WTC11 (cell line): ENCODE measurements at regions of chr14 and their contacts with region 1.

Region 1: DNA sequence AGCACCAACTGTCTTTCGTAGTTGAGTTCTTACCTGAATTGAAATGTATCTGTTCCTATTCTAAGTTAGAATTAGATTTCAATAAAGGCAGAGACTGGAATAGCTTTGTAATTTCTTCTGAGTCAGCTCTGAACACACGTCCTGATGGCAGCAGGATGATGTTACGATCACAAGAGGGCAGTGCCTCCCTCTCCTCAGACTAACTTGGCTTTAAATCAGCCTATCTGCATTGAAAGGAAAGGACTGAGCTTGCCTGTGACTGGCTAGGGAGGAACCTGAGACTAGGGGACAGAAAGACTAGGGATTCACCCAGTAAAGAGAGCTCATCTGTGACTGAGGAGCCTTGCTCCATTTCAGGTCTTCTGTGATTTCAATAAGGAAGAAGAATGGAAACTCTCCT is 323.7 kb upstream of the OR4E1 start:
- DNase-seq: peak; percentile 39
- ATAC-seq: peak; percentile 100
- H3K4me3 Mint-ChIP-seq: no peak overlapping the region
- H3K27ac Mint-ChIP-seq: peak overlapping the region; percentile 63; the same call in 1 of the 2 replicates
- H3K4me1 Mint-ChIP-seq: peaks cover 3% of the 10 kb centered on the region
- H3K27me3 Mint-ChIP-seq: no peaks in the 10 kb centered on the region
- CTCF ChIP-seq: no peak

Region 2: DNA sequence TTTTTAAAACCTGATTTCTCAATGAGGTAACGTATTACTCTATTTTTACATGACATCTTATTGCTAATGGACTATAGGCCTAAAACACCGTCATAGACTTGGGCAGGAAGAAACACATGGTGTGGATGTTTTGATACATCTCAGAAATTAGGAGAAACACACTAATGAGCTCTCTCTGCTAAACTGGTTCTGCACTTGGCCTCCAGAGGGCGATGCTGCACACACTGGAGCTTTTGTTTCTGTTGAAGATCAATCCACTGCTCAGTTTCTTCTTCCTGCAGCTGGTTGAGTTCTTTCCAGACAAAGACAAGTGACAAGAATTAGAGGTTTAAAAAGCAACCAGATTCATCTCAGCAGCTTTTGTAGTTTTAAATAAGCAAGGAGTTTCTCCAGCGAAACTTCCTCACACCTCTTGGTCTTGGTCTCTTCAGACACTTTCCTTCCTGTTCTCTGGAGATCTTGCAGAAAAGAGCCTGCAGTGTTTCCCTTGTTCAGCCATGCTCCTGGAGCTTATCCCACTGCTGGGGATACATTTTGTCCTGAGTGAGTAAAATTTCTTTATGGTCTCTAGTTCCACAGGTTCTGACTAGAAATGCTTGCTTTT is 145.1 kb before region 1 on chr14:
- CTCF ChIA-PET with region 1: interaction called, 14 read pairs
- POLR2A ChIA-PET with region 1: no interaction called
- DNase-seq: peak; percentile 77
- ATAC-seq: peak; percentile 83
- H3K4me3 Mint-ChIP-seq: no peak overlapping the region
- H3K27ac Mint-ChIP-seq: no peak overlapping the region
- H3K4me1 Mint-ChIP-seq: no peaks in the 10 kb centered on the region
- H3K27me3 Mint-ChIP-seq: peaks cover 20% of the 10 kb centered on the region
- CTCF ChIP-seq: peak; percentile 30

Region 3: DNA sequence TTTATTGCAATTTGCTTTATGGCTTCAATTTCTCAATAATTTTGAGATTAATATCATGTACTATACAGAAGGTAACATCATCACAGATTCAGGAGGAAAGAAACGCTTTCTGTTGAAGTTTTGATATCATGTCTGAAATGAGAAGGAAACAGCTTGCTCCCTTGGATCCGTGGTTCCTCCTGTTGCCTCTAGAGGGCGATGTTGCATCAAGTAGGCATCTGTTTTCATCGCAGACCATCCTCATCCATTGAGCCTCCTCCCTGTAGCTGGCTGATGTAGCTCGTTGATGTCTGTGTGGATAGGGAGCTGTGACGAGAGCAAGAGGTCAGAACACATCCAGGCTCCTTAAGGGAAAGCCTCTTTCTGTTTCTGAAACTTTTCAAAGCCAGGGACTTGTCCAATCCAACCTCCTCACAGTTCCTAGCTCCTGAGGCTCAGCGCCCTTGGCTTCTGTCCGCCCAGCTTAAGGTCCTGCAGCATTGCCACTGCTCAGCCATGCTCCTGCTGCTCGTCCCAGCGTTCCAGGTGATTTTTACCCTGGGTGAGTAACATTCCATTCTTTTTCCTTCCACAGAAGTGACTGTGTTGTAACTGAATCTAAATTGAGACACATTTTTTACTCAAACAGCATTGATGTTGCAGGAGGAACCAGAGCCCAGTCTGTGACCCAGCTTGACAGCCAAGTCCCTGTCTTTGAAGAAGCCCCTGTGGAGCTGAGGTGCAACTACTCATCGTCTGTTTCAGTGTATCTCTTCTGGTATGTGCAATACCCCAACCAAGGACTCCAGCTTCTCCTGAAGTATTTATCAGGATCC is 18.9 kb before region 1 on chr14:
- CTCF ChIA-PET with region 1: interaction called, 123 read pairs
- POLR2A ChIA-PET with region 1: interaction called, 3 read pairs
- DNase-seq: peak; percentile 67
- ATAC-seq: peak; percentile 93
- H3K4me3 Mint-ChIP-seq: no peak overlapping the region
- H3K27ac Mint-ChIP-seq: no peak overlapping the region
- H3K4me1 Mint-ChIP-seq: no peaks in the 10 kb centered on the region
- H3K27me3 Mint-ChIP-seq: peaks cover 30% of the 10 kb centered on the region
- CTCF ChIP-seq: peak; percentile 87

Region 4: DNA sequence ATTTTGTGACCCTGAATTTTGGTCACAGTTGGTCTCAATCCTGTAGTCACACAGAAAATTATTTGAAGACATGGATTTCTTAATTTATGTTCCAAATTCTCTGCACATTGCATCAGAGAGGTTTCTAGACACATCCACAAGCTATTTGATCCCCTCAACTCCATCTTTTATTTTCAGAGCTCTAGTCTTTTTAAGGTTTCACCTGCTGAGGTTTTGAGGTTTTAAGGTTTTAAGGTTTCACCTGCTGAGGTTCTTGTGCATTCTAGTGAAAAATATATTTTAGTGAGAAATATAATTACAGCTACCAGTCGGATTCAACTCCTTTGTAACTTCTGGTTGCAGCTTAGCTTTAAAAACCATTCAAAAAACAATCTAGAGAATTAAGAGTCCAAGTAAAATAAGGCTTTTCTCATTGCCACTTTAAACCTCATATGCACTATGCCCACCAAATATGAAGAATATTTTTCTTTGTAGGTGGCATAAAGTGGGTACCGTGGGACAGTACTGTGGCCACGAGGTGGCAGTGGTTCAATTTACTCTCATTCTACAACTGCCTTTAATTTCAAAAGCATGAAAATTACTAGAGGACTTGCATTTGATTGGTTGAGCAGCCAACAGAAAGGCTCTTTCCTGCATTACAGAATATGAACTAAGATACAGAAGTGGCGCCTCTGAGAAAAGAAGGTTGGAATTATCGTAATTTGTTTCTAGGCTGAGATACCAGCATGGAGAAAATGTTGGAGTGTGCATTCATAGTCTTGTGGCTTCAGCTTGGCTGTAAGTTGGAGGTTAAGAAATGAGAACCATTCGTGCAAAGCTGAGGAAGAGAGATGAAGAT is 42.9 kb after region 1 on chr14:
- CTCF ChIA-PET with region 1: interaction called, 24 read pairs
- POLR2A ChIA-PET with region 1: no interaction called
- DNase-seq: no peak
- ATAC-seq: peak; percentile 41; the same call in 1 of the 2 replicates
- H3K4me3 Mint-ChIP-seq: no peak overlapping the region
- H3K27ac Mint-ChIP-seq: no peak overlapping the region
- H3K4me1 Mint-ChIP-seq: no peaks in the 10 kb centered on the region
- H3K27me3 Mint-ChIP-seq: no peaks in the 10 kb centered on the region; the same call in 1 of the 2 replicates
- CTCF ChIP-seq: no peak

Region 5: GRCh38 chr14:22052795-22053194 is 55.5 kb after region 1 on chr14:
- CTCF ChIA-PET with region 1: interaction called, 15 read pairs
- POLR2A ChIA-PET with region 1: no interaction called
- DNase-seq: no peak
- ATAC-seq: peak; percentile 30; the same call in 1 of the 2 replicates
- H3K4me3 Mint-ChIP-seq: no peak overlapping the region
- H3K27ac Mint-ChIP-seq: no peak overlapping the region
- H3K4me1 Mint-ChIP-seq: peaks cover 4% of the 10 kb centered on the region
- H3K27me3 Mint-ChIP-seq: peaks cover 3% of the 10 kb centered on the region; the same call in 1 of the 2 replicates
- CTCF ChIP-seq: no peak

Region 6: GRCh38 chr14:22099942-22100763 is 102.9 kb after region 1 on chr14:
- CTCF ChIA-PET with region 1: interaction called, 40 read pairs
- POLR2A ChIA-PET with region 1: no interaction called
- DNase-seq: peak; percentile 75
- ATAC-seq: peak; percentile 100
- H3K4me3 Mint-ChIP-seq: no peak overlapping the region
- H3K27ac Mint-ChIP-seq: no peak overlapping the region
- H3K4me1 Mint-ChIP-seq: no peaks in the 10 kb centered on the region
- H3K27me3 Mint-ChIP-seq: peaks cover 10% of the 10 kb centered on the region
- CTCF ChIP-seq: 0 out of 2 replicates have a peak, but pooled peaks have one; percentile 16

Region 7: DNA sequence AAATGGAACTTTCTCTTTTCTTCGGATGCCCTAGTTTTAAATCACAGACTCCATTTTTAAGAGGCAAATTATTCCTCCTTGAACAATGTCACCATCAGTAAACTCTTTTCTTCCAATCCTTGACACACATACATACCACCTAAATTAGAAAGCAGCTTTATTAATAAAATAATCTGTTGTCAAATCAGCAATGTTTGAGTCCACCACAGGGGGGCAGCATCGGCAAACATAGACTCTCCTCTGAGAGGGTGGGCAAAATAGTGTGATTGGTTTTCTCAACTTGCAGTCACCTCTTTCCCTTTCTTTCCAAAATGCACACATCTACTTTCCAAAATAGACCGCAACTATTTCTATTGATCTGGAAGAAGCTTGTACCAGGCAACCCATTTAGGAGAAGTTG is 114.7 kb after region 1 on chr14:
- CTCF ChIA-PET with region 1: interaction called, 14 read pairs
- POLR2A ChIA-PET with region 1: no interaction called
- DNase-seq: peak; percentile 63
- ATAC-seq: no peak
- H3K4me3 Mint-ChIP-seq: no peak overlapping the region
- H3K27ac Mint-ChIP-seq: no peak overlapping the region
- H3K4me1 Mint-ChIP-seq: peaks cover 18% of the 10 kb centered on the region
- H3K27me3 Mint-ChIP-seq: 0 out of 2 replicates have a peak, but pooled peaks cover 4% of the 10 kb centered on the region
- CTCF ChIP-seq: peak; percentile 49

Region 8: GRCh38 chr14:22418631-22419030 is 421.3 kb after region 1 on chr14:
- CTCF ChIA-PET with region 1: no interaction called
- POLR2A ChIA-PET with region 1: no interaction called
- DNase-seq: no peak
- ATAC-seq: no peak
- H3K4me3 Mint-ChIP-seq: no peak overlapping the region
- H3K27ac Mint-ChIP-seq: no peak overlapping the region
- H3K4me1 Mint-ChIP-seq: peaks cover 18% of the 10 kb centered on the region
- H3K27me3 Mint-ChIP-seq: no peaks in the 10 kb centered on the region
- CTCF ChIP-seq: no peak